Sigmoid colon (tissue), 7 donors: ENCODE measurements at regions of chr1 and their contacts with region 1.

Region 1: DNA sequence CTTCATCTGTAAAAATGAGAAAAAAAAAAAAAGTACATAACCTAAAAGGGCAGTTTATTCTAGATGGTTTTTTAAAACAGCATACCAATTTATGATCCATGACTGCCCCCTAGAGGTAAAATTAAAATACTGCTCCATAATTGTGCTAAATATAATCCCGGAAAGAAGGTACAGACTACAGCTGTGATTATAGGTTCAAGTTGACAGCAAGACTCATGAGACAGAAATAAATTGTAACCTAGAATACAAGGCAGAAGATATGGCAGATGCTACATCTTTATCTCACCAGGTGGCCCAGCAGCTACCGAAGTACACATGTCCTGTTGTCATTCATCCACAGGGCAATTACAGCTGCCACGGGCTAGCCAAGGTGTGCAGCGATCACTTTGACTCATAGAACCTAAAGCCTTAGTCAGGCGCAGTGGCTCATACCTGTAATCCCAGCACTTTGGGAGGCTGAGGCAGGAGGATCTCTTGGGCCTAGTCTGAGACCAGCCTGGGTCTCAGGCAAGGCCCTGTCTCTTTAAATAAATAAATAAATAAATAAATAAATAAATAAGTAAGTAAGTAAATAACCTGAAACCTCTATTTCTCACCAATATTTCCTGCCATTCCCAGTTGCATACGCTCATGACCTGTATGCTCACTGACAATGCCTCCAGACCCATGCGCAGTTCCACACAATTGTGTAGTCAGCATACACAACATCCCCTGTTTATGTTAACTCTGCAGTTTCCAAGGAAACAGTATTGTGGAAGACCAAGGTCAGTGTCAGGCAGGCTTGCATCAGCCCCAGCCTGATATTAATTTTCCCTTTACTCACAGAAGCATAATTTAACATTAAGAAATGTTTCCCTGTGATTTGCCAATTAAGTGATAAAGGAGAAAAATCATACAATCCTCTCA is 18.3 kb upstream of the PPIE start:
- DNase-seq: no peak
- H3K4me3 ChIP-seq: no peak overlapping the region
- H3K27ac ChIP-seq: no peak overlapping the region
- H3K4me1 ChIP-seq: no peaks in the 10 kb centered on the region
- H3K27me3 ChIP-seq: peaks cover 0 to 2% (median 0%) of the 10 kb centered on the region in 3 donors
- CTCF ChIP-seq: peak; percentile 33 to 67 (median 61)
- EP300 ChIP-seq: no peak
- POLR2A ChIP-seq: no peak

Region 2: GRCh38 chr1:39609618-39610331 is 110.6 kb before region 1 on chr1:
- intact Hi-C with region 1: loop called (anchors 1 kb)
- DNase-seq: peak; percentile 83
- H3K4me3 ChIP-seq: no peak overlapping the region
- H3K27ac ChIP-seq: peak overlapping the region in 3 of 4 donors; percentile 14 to 34 (median 19)
- H3K4me1 ChIP-seq: no peaks in the 10 kb centered on the region
- H3K27me3 ChIP-seq: peaks cover 0 to 7% (median 0%) of the 10 kb centered on the region in 3 donors
- CTCF ChIP-seq: peak in 2 of 4 experiments; percentile 32 to 38
- EP300 ChIP-seq: no peak
- POLR2A ChIP-seq: no peak